ENCODE measurements at regions of chr19 and their contacts with region 1.

Region 1: GRCh38 chr19:18281082-18282020 is at the start of gene JUND:
- DNase-seq: peak; percentile 98
- H3K4me3 Mint-ChIP-seq: peak within 1 kb of the TSS; percentile 87
- H3K27ac Mint-ChIP-seq: peak within 1 kb of the TSS; percentile 96
- H3K4me1 Mint-ChIP-seq: peaks cover 49% of the 10 kb centered on the region
- H3K27me3 Mint-ChIP-seq: no peaks in the 10 kb centered on the region
- total RNA-seq, gene JUND: 232 to 236 TPM

Region 2: DNA sequence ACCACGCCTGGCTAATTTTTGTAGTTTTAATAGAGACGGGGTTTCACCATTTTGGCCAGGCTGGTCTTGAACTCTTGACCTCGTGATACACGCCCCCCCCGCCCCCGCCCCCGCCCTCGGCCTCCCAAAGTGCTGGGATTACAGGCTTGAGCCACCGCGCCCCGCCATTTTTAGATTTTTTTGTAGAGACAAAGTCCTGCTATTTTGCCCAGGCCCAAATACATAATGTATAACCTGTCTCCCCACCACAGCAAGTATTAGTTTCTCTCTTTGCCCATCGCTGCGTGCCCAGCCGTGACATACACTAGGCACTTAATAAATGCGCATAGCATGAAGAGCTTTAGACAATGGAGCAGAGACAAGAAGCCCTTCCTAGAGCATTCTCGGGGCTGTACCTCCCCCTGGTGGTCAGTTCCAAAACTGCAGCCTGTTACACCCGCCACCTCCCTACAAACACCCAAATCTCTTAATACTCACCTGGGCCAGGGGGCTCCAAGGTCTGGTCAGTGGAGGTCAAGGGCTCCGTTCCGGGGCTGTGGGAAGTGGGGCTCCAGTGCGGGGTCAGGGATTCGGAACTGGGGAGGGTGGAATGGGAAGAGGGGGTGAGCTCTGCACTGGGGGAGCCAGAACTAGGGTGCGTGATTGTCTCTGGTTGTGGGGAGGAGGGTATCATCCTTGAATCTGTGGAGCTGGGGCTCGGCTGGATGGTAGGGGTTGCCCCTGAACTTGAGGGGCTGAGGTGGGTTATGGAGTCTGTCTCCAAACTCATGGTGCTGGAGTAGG is 29.6 kb before region 1 on chr19:
- CTCF ChIA-PET with region 1: interaction called, 11 read pairs
- POLR2A ChIA-PET with region 1: interaction called, 4 read pairs
- intact Hi-C with region 1: no loop called
- DNase-seq: peak; percentile 88
- H3K4me3 Mint-ChIP-seq: no peak overlapping the region
- H3K27ac Mint-ChIP-seq: peak overlapping the region; percentile 6
- H3K4me1 Mint-ChIP-seq: peaks cover 4% of the 10 kb centered on the region
- H3K27me3 Mint-ChIP-seq: peaks cover 14% of the 10 kb centered on the region

Region 3: GRCh38 chr19:18304458-18305310 is 23.3 kb after region 1 on chr19:
- CTCF ChIA-PET with region 1: interaction called, 197 read pairs
- POLR2A ChIA-PET with region 1: interaction called, 301 read pairs
- intact Hi-C with region 1: loop called (anchors 1 kb)
- DNase-seq: peak; percentile 92
- H3K4me3 Mint-ChIP-seq: peak overlapping the region; percentile 96
- H3K27ac Mint-ChIP-seq: peak overlapping the region; percentile 99
- H3K4me1 Mint-ChIP-seq: peaks cover 41% of the 10 kb centered on the region
- H3K27me3 Mint-ChIP-seq: no peaks in the 10 kb centered on the region

Region 4: GRCh38 chr19:18328340-18329034 is 47.1 kb after region 1 on chr19:
- CTCF ChIA-PET with region 1: interaction called, 321 read pairs
- POLR2A ChIA-PET with region 1: interaction called, 257 read pairs
- intact Hi-C with region 1: loop called (anchors 1 kb)
- DNase-seq: peak; percentile 94
- H3K4me3 Mint-ChIP-seq: peak overlapping the region; percentile 68
- H3K27ac Mint-ChIP-seq: peak overlapping the region; percentile 56
- H3K4me1 Mint-ChIP-seq: peaks cover 17% of the 10 kb centered on the region
- H3K27me3 Mint-ChIP-seq: no peaks in the 10 kb centered on the region

Region 5: GRCh38 chr19:18408053-18408476 is 126.7 kb after region 1 on chr19:
- CTCF ChIA-PET with region 1: interaction called, 43 read pairs
- POLR2A ChIA-PET with region 1: no interaction called
- intact Hi-C with region 1: loop called (anchors 2 kb)
- DNase-seq: peak; percentile 46
- H3K4me3 Mint-ChIP-seq: no peak overlapping the region
- H3K27ac Mint-ChIP-seq: no peak overlapping the region
- H3K4me1 Mint-ChIP-seq: peaks cover 5% of the 10 kb centered on the region
- H3K27me3 Mint-ChIP-seq: peaks cover 8% of the 10 kb centered on the region